ENCODE measurements at regions of chr4 and their contacts with region 1.

Region 1: GRCh38 chr4:98995183-98996055 is at the start of gene METAP1:
- DNase-seq: peak; percentile 100
- H3K4me3 ChIP-seq: peak within 1 kb of the TSS; percentile 87 to 100 (median 96)
- H3K27ac ChIP-seq: peak within 1 kb of the TSS; percentile 85 to 94 (median 90)
- H3K4me1 ChIP-seq: peaks cover 0 to 51% (median 28%) of the 10 kb centered on the region in 6 donors
- H3K27me3 ChIP-seq: no peaks in the 10 kb centered on the region
- CTCF ChIP-seq: peak; percentile 32 to 75 (median 63)
- POLR2A ChIP-seq: peak in 2 of 3 donors; percentile 46 to 51
- total RNA-seq, gene METAP1: 27.9 to 34.7 (median 31.7) TPM

Region 2: GRCh38 chr4:99058228-99058627 is 62.8 kb after region 1 on chr4:
- intact Hi-C with region 1: loop called (anchors 5 kb)
- DNase-seq: no peak
- H3K4me3 ChIP-seq: no peak overlapping the region
- H3K27ac ChIP-seq: no peak overlapping the region
- H3K4me1 ChIP-seq: peaks cover 0 to 15% (median 6%) of the 10 kb centered on the region in 6 donors
- H3K27me3 ChIP-seq: no peaks in the 10 kb centered on the region
- CTCF ChIP-seq: no peak
- POLR2A ChIP-seq: no peak